Gastrocnemius medialis (tissue), 4 donors: ENCODE measurements at regions of chr19 and their contacts with region 1.

Region 1: GRCh38 chr19:46753420-46754155 is 7.3 kb upstream of the STRN4 start:
- DNase-seq: no peak
- ATAC-seq: no peak
- H3K4me3 ChIP-seq: no peak overlapping the region
- H3K27ac ChIP-seq: no peak overlapping the region
- H3K4me1 ChIP-seq: peaks cover 0 to 5% of the 10 kb centered on the region in 2 donors
- H3K27me3 ChIP-seq: no peaks in the 10 kb centered on the region
- CTCF ChIP-seq: peak in 3 of 5 experiments; percentile 30 to 50 (median 41)
- POLR2A ChIP-seq: no peak

Region 2: DNA sequence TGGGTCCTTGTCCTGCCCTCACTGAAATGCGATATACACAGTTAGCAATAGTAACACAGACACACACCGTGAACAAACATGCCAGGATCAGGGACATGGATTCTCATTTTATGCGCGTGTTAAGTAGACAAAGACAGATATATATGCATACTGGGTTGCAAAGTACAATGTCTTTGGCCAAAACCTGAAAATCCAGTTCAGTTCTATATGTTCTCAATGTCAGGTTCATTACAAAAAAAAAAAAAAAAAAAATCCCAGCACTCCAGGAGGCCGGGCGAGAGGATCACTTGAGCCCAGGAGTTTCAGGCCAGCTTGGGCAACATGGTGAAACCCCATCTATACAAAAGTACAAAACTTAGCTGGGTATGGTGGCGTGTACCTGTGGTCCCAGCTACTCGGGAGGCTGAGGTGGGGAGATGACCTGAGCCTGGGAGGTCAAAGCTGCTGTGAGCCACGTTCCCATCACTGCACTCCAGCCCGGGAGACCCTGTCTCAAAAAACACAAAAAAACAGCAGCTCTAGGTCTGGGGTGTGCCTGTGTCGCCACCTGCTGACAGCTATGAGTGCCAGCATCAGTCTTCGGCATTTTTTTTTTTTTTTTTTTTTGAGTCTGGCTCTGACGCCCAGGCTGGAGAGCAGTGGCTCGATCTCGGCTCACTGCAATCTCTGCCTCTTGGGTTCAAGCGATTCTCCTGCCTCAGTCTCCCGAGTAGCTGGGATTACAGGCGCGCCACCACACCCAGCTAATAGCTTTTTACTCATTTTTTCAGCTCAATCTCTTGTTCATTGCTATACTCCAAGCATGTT is 86.8 kb after region 1 on chr19:
- in situ Hi-C with region 1: loop called in 3 of 4 experiments (anchors 5 kb)
- intact Hi-C with region 1: loop called (anchors 1 kb)
- DNase-seq: no peak
- ATAC-seq: peak in 1 of 2 donors; percentile 67
- H3K4me3 ChIP-seq: no peak overlapping the region
- H3K27ac ChIP-seq: peak overlapping the region in 1 of 4 donors; percentile 20
- H3K4me1 ChIP-seq: peaks cover 0 to 3% of the 10 kb centered on the region in 2 donors
- H3K27me3 ChIP-seq: no peaks in the 10 kb centered on the region
- CTCF ChIP-seq: peak; percentile 65 to 80 (median 78)
- POLR2A ChIP-seq: no peak